ENCODE measurements at regions of chr6 and their contacts with region 1.

Region 1: DNA sequence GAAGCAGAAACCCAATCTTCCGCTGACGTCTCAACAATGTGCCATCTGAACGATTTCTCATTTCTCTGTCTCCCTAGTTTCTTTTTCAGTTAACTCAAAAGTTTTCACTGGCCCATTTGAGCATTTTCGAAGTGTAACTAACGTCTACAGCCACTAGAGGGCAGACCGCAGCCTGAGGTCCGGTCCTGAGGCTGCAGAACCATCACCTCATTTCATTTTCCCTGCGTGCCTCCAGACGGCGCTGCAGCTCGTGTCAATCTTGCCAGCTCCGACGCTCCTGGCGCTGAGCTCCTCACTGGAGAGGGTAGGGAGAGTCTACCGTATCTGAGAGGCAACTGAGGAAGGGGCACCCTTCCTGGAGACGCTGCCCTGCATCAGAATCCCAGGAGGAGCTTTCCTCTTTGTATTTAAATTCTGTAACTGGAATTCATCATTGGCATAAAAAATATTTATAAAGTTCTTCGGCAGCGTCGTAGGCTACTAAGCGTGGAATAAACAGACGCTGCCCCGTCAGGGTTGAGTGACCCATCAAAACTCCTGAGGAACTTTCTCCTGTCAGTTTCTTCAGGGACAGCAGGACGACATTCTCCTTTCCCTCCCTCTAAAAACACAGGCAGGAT is 28.5 kb upstream of the DTNBP1 start:
- DNase-seq: peak; percentile 89 to 94 (median 91)
- H3K4me3 ChIP-seq: peak overlapping the region in 2 of 7 experiments; percentile 24 to 54
- H3K27ac ChIP-seq: no peak overlapping the region
- H3K4me1 ChIP-seq: peaks cover 0 to 6% (median 3%) of the 10 kb centered on the region in 4 experiments
- H3K27me3 ChIP-seq: no peaks in the 10 kb centered on the region

Region 2: GRCh38 chr6:16128759-16129622 is 437.6 kb after region 1 on chr6 and contains the start of gene MYLIP:
- CTCF ChIA-PET with region 1: interaction called, 23 read pairs
- POLR2A ChIA-PET with region 1: interaction called, 4 read pairs
- DNase-seq: peak; percentile 96 to 98 (median 97)
- H3K4me3 ChIP-seq: peak within 1 kb of the TSS; percentile 73 to 97 (median 88)
- H3K27ac ChIP-seq: peak within 1 kb of the TSS; percentile 65 to 83
- H3K4me1 ChIP-seq: peaks cover 21 to 38% (median 34%) of the 10 kb centered on the region in 4 experiments
- H3K27me3 ChIP-seq: no peaks in the 10 kb centered on the region

Region 3: DNA sequence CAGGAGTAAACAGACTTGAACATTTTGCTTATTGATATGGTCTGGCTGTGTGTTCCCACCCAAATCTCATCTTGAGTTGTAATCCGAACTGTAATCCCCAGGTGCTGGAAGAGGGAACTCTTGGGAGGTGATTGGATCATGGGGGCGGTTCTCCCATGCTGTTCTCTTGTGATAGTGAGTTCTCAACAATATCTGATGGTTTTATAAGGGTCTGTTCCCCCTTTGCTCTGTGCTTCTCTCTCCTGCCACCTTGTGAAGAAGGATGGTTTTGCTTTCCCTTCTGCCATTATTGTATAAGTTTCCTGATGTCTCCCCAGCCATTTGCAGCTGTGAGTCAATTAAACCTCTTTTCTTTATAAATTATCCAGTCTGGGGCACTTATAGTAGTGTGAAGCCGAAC is 477.5 kb after region 1 on chr6:
- CTCF ChIA-PET with region 1: interaction called, 13 read pairs
- POLR2A ChIA-PET with region 1: no interaction called
- DNase-seq: peak; percentile 60 to 77 (median 74)
- H3K4me3 ChIP-seq: no peak overlapping the region
- H3K27ac ChIP-seq: no peak overlapping the region
- H3K4me1 ChIP-seq: peaks cover 0 to 10% (median 8%) of the 10 kb centered on the region in 4 experiments
- H3K27me3 ChIP-seq: no peaks in the 10 kb centered on the region